PC-9 (cell line): ENCODE measurements at regions of chr17 and their contacts with region 1.

Region 1: GRCh38 chr17:48283411-48283810 is 146.6 kb downstream of the SKAP1 start:
- DNase-seq: no peak
- H3K4me3 ChIP-seq: no peak overlapping the region
- H3K27ac ChIP-seq: no peak overlapping the region
- H3K4me1 ChIP-seq: peaks cover 7% of the 10 kb centered on the region; the same call in 1 of the 2 replicates
- H3K27me3 ChIP-seq: no peaks in the 10 kb centered on the region
- CTCF ChIP-seq: no peak

Region 2: DNA sequence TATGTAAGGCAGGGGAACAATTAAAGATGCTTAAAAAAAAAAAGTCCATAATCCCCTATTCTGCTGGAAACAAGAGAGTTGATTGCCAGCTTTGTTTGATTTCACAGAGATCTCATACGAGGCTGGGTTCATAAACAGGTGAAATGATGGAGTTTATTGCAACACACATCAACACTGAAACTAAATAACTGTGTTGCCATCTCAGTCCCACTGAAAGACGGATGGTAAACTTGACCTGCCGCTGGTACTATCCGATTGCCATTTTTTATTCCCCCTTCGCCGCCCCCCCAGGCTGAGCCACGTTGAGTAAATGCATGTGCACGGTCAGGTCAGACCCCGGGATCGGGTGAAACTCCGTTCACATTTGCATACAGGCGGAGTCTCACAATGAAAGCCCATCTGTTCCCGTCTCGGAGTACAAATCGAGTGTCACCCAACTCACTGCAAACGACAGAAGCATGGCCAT is 27.4 kb after region 1 on chr17:
- CTCF ChIA-PET with region 1: no interaction called
- POLR2A ChIA-PET with region 1: no interaction called
- intact Hi-C with region 1: no loop called
- DNase-seq: no peak
- H3K4me3 ChIP-seq: no peak overlapping the region
- H3K27ac ChIP-seq: no peak overlapping the region
- H3K4me1 ChIP-seq: no peaks in the 10 kb centered on the region
- H3K27me3 ChIP-seq: no peaks in the 10 kb centered on the region
- CTCF ChIP-seq: no peak

Region 3: DNA sequence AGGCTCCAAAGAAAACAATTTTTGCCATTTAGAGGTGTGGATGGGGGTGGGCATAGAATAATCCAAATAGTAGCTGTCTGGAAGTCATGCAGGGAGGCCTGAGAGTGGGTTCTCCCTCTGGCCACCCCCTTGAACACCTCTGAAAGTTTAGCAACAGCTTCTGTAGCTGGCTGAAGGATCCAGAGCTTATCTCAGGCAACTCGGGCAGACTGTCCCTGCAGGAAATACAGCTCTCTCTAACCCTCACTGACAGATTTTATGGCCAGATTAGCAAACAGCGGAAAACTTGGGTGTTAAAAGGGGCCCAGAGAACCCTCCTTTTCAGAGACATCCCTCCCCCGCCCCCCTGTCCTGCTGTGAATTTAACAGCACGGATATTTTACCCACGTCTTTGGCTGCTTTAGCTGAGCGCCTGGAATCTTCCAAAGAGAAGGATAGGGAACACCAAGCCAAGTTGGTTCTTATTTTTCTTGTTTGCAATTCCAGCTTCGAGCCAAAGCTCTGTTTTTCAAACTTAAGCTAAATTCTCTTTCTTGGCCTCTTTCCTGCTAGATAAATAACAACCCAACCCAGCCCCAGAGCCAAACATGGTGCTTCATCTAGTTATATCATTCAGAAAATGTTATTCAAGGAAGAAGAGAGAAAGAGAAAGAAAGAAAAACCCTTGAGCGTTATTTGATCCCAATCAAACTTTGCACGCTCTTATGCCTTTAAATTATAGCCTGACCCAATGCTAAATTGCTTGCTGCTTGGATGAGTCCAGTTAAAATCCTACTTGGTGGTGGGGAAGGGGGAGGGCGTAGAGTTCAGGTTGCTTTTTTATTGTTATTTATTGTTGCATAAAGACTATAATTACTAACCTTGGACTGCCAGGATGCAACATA is 263.8 kb after region 1 on chr17:
- CTCF ChIA-PET with region 1: no interaction called
- POLR2A ChIA-PET with region 1: interaction called, 13 read pairs
- intact Hi-C with region 1: no loop called
- DNase-seq: no peak
- H3K4me3 ChIP-seq: no peak overlapping the region
- H3K27ac ChIP-seq: no peak overlapping the region
- H3K4me1 ChIP-seq: no peaks in the 10 kb centered on the region
- H3K27me3 ChIP-seq: no peaks in the 10 kb centered on the region
- CTCF ChIP-seq: no peak